HCT116 (cell line): ENCODE measurements at regions of chr17 and their contacts with region 1.

Region 1: DNA sequence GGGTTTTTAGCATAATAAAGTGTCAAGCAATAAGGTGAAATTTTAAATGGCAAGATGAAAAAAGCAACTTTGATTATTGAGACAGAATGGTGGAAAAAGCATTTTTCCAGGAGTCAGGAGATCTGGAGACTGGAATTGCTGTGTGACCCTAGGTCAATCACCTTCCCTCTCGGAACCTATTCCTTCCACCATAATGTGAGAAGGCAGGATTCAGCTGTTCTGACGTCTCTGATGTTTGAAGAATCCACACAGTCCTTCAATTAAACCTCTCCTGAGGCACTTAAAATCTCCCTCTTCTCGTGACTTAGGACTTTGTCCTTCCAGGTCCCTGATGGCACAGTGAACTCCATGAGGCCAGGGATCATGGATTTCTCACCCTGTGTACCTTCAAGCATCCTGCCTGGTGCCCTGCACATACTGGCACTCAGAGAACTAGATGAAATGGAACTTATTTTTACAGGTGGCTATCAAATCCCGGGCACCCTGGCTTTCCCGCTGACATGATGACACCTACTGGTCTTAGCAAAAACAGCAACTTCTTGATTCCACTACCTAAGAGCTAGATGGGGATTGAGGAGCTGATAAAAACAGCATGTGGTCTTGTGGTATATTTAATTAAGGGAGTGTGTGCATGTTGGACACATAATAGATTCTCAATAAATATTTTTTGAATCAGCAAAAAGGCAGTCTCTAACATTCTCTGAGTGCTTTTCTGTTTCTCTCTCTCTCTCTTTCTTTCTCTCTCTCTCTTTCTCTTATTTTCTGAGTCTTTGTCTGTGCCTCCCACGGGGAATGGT is 2.3 kb upstream of the CCDC182 start:
- DNase-seq: peak; percentile 76
- ATAC-seq: peak; percentile 93
- H3K4me3 ChIP-seq: no peak overlapping the region
- H3K27ac ChIP-seq: no peak overlapping the region
- H3K4me1 ChIP-seq: no peaks in the 10 kb centered on the region
- H3K27me3 ChIP-seq: peaks cover 10% of the 10 kb centered on the region; the same call in 1 of the 2 replicates
- CTCF ChIP-seq: peak; percentile 92 to 98 (median 93)
- POLR2A ChIP-seq: no peak
- RAD21 ChIP-seq: peak; percentile 96

Region 2: DNA sequence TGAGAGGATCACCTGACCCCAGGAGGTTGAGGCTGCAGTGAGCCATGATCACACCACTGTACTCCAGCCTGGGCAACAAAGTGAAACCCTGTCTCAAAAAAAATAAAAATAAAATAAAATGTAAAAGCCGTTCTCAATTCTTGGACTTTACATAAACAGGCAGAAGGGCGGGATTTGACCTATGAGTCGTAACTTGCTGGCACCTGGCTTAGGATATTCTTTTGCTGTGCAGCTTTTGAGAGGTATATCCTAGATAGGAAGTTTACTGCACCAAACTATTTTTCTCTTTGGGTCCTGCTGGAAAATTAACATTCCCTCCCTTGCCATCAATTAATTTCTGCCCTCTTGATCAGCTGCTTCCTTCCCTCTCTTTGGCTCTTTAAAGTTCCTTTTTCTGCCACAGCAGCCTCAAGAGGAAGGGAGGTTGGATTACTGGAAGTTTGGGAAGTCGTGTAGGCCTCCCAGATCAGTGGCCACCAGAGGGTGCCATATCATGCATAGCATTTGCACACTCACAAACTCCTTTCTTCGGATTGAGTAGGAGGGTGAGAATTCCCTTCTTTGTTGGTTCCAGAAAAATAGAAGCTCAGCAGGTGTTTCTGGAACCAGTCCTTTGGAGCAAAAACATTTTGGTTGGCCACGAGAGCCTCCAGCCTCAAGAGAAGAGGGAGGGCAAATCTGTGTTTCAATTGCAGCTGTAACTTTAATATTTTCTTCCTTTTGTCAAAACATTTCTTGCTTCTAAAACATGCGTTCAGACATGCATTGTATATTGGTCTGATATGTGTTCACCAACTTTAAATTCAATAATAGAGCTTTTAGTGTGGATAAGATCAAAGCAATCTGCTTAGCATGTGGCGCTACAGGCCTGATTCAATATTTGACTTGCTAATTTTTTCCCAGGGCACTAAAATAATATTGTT is 149.6 kb before region 1 on chr17:
- CTCF ChIA-PET with region 1: interaction called, 13 read pairs
- POLR2A ChIA-PET with region 1: no interaction called
- RAD21 ChIA-PET with region 1: no interaction called
- intact Hi-C with region 1: loop called (anchors 1 kb)
- DNase-seq: peak; percentile 65
- ATAC-seq: peak; percentile 91
- H3K4me3 ChIP-seq: no peak overlapping the region
- H3K27ac ChIP-seq: peak overlapping the region; percentile 37; the same call in 1 of the 2 replicates
- H3K4me1 ChIP-seq: peaks cover 5 to 13% of the 10 kb centered on the region in 2 experiments; a peak in 3 of 4 replicates
- H3K27me3 ChIP-seq: no peaks in the 10 kb centered on the region
- CTCF ChIP-seq: peak; percentile 93 to 98 (median 98)
- POLR2A ChIP-seq: no peak
- RAD21 ChIP-seq: peak; percentile 80

Region 3: GRCh38 chr17:57727630-57728175 is 19.7 kb before region 1 on chr17:
- CTCF ChIA-PET with region 1: no interaction called
- POLR2A ChIA-PET with region 1: no interaction called
- RAD21 ChIA-PET with region 1: no interaction called
- intact Hi-C with region 1: no loop called
- DNase-seq: no peak
- ATAC-seq: no peak
- H3K4me3 ChIP-seq: no peak overlapping the region
- H3K27ac ChIP-seq: no peak overlapping the region
- H3K4me1 ChIP-seq: no peaks in the 10 kb centered on the region
- H3K27me3 ChIP-seq: 0 out of 2 replicates have a peak, but pooled peaks cover 4% of the 10 kb centered on the region
- CTCF ChIP-seq: no peak
- POLR2A ChIP-seq: no peak
- RAD21 ChIP-seq: no peak

Region 4: DNA sequence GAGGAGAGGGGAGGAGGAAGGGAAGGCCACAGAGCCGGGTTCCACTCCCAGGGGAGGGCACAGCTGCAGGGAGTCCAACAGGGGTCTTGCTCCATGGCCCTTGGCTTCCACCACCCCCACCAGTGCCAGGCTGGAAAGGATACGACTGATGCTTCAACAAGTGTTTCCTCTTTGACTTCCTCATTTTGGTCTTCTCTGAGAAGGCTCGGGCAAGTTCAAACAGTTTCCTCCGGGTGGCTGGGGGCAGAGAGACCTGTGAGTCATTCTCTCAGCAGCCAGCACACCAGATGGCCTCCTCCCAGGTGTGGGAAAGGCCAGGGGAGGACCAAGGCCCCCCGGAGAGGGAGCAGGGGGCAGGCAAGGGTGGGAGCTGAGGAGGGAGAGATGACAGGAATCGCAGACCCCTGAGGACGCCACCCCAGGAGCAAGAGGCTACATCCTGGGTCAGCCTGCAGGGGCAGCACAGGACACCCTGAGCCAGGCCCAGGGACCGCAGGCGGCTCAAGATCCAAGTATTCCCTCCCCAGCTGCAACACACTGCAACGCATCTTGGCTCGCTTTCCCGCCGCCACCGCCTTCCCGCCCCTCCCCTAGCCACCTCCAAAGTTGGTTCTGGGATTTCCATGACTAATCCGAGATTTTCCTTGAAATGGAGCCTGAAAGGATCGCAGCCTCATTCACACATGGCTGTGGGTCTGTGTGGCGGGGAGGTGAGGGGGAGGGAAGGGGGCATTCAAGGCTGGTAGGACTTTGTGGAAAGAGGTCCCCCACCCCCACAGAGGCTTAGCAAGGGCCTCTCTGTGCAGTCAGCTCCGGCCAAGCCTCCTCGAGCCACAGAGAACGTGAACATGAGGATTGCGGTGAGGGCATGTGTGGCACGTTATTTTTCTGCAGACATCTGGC is 120.8 kb after region 1 on chr17:
- CTCF ChIA-PET with region 1: no interaction called
- POLR2A ChIA-PET with region 1: no interaction called
- RAD21 ChIA-PET with region 1: no interaction called
- intact Hi-C with region 1: no loop called
- DNase-seq: peak; percentile 90
- ATAC-seq: peak; percentile 85
- H3K4me3 ChIP-seq: peak overlapping the region; percentile 6 to 41; a peak in 3 of 4 replicates
- H3K27ac ChIP-seq: peak overlapping the region; percentile 77
- H3K4me1 ChIP-seq: peaks cover 47 to 88% of the 10 kb centered on the region in 2 experiments
- H3K27me3 ChIP-seq: no peaks in the 10 kb centered on the region
- CTCF ChIP-seq: peak in 2 of 3 experiments; percentile 74 to 77; a peak in 4 of 6 replicates
- POLR2A ChIP-seq: no peak
- RAD21 ChIP-seq: no peak